Transverse colon (tissue), 4 donors: ENCODE measurements at regions of chr17 and their contacts with region 1.

Region 1: GRCh38 chr17:28384281-28385036 is 13.0 kb downstream of the SARM1 start:
- DNase-seq: peak; percentile 84
- H3K4me3 ChIP-seq: peak overlapping the region; percentile 10 to 53 (median 41)
- H3K27ac ChIP-seq: peak overlapping the region; percentile 63 to 74 (median 70)
- H3K4me1 ChIP-seq: peaks cover 0 to 19% (median 8%) of the 10 kb centered on the region in 4 donors
- H3K27me3 ChIP-seq: no peaks in the 10 kb centered on the region
- CTCF ChIP-seq: peak in 1 of 5 experiments; percentile 3
- EP300 ChIP-seq: no peak
- POLR2A ChIP-seq: peak; percentile 73

Region 2: DNA sequence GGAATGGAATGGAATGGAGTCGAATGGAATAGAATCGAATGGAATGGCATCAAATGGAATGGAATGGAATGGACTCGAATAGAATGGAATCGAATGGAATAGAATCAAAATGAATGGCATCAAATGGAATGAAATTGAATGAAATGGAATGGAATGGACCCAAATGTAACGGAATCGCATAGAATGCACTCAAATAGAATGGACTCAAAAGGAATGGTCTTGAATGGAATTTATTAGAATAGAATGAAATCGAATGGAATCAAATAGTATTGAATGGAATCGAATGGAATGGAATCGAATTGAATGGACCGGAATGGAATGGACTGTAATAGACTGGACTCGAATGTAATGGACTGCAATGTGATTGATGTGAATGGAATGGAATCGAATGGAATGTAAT is 1592.0 kb before region 1 on chr17:
- in situ Hi-C with region 1: no loop called
- intact Hi-C with region 1: no loop called
- DNase-seq: no peak
- H3K4me3 ChIP-seq: no peak overlapping the region
- H3K27ac ChIP-seq: no peak overlapping the region
- H3K4me1 ChIP-seq: no peaks in the 10 kb centered on the region
- H3K27me3 ChIP-seq: no peaks in the 10 kb centered on the region
- CTCF ChIP-seq: no peak
- EP300 ChIP-seq: no peak
- POLR2A ChIP-seq: no peak

Region 3: DNA sequence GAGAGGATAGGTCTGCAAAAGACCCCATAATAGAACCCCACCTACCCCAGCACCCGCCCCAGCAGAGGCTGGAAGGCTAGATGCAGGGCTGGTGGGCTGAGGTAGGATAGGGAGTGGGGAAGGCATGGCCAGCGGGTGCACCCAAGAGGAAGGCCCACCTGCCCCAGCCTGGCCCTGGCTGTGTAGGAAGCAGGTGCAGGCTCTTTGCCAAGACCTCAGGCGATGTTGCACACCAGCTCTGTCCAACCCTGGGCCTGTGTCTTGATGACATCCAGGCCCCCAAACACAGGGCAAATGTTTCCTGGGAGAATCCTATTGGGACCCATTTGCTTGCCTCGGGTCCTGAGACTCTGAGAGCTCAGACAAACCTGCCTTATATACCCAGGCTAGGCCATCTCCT is 155.8 kb after region 1 on chr17:
- in situ Hi-C with region 1: no loop called
- intact Hi-C with region 1: loop called (anchors 5 kb)
- DNase-seq: no peak
- H3K4me3 ChIP-seq: no peak overlapping the region
- H3K27ac ChIP-seq: no peak overlapping the region
- H3K4me1 ChIP-seq: peaks cover 0 to 7% (median 0%) of the 10 kb centered on the region in 4 donors
- H3K27me3 ChIP-seq: no peaks in the 10 kb centered on the region
- CTCF ChIP-seq: no peak
- EP300 ChIP-seq: no peak
- POLR2A ChIP-seq: no peak

Region 4: DNA sequence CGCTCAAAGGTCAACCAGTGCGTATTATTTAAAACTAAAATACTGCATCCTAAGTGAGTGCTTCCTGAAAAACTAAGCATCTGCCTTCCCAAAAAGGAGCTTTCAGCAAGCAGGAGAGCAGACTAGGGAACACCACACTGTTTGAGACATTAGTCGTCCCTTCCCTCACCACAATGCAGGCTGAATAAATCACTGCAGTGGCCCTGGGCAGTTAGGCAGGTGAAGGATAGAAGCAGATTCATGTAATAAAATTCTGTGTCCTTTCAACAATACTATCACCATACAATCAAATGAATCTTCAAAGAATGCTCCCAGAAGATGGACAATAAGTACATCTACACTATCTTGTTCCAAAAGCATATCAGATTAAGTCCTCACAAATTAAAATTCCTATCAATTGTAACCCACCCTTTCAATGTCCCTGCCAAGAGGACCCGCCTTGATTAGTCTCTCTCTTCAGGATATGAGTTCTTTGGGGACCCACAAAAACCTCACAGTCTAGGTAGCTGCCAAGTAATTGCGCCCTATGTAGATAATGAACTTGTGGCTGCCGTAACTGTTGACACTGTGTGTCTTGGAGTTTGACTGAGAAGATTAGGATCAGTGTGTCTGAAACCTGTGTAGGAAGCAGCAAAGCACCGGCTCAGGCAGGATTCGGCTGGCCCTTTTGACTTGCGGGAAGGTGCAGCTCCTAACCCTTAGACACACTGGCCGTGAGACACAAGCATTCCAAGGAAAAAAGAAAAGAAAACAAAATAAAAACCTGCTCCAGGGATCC is 1868.7 kb after region 1 on chr17:
- in situ Hi-C with region 1: no loop called
- intact Hi-C with region 1: loop called (anchors 5 kb)
- DNase-seq: no peak
- H3K4me3 ChIP-seq: no peak overlapping the region
- H3K27ac ChIP-seq: no peak overlapping the region
- H3K4me1 ChIP-seq: no peaks in the 10 kb centered on the region
- H3K27me3 ChIP-seq: no peaks in the 10 kb centered on the region
- CTCF ChIP-seq: no peak
- EP300 ChIP-seq: no peak
- POLR2A ChIP-seq: no peak